ENCODE measurements at regions of chr1 and their contacts with region 1.

Region 1: GRCh38 chr1:94562519-94563260 is 21.1 kb upstream of the F3 start:
- DNase-seq: no peak
- H3K4me3 ChIP-seq: no peak overlapping the region
- H3K27me3 ChIP-seq: no peaks in the 10 kb centered on the region
- CTCF ChIP-seq: no peak

Region 2: DNA sequence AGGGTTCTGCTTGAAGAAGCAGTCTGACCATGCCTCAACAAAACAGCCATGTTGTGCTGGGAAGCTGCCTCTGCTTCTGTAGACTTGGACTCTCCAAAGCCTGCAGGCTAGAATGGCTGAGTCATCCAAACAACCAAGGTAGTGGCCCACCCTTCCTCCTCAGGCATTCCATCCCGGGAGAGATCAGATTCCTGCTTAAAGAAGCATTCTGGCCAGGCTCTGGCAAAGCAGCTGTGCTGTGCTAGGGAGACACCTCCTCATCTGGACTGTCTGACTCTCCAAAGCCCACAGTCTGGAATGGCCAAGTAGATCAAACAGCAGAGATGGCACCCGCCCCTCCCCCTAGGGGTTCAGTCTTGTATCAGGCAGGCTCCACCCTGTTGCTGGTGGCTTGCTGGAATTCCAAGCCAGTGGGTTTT is 17.2 kb after region 1 on chr1:
- CTCF ChIA-PET with region 1: interaction called, 12 read pairs
- POLR2A ChIA-PET with region 1: no interaction called
- DNase-seq: peak; percentile 89
- H3K4me3 ChIP-seq: no peak overlapping the region
- H3K27me3 ChIP-seq: no peaks in the 10 kb centered on the region
- CTCF ChIP-seq: no peak

Region 3: GRCh38 chr1:94863919-94864318 is 301.2 kb after region 1 on chr1:
- CTCF ChIA-PET with region 1: no interaction called
- POLR2A ChIA-PET with region 1: no interaction called
- DNase-seq: no peak
- H3K4me3 ChIP-seq: no peak overlapping the region
- H3K27me3 ChIP-seq: no peaks in the 10 kb centered on the region
- CTCF ChIP-seq: no peak

Measured in BJ (cell line).